ENCODE measurements at regions of chrX and their contacts with region 1.

Region 1: GRCh38 chrX:25144043-25144940 is 128.5 kb upstream of the ARX start:
- DNase-seq: peak; percentile 36
- H3K4me3 Mint-ChIP-seq: no peak overlapping the region
- H3K27ac Mint-ChIP-seq: no peak overlapping the region
- H3K4me1 Mint-ChIP-seq: no peaks in the 10 kb centered on the region
- H3K27me3 Mint-ChIP-seq: no peaks in the 10 kb centered on the region

Region 2: GRCh38 chrX:24838629-24839028 is 305.7 kb before region 1 on chrX:
- CTCF ChIA-PET with region 1: interaction called, 44 read pairs
- POLR2A ChIA-PET with region 1: no interaction called
- intact Hi-C with region 1: loop called (anchors 5 kb)
- DNase-seq: no peak
- H3K4me3 Mint-ChIP-seq: no peak overlapping the region
- H3K27ac Mint-ChIP-seq: no peak overlapping the region
- H3K4me1 Mint-ChIP-seq: no peaks in the 10 kb centered on the region
- H3K27me3 Mint-ChIP-seq: no peaks in the 10 kb centered on the region

Region 3: DNA sequence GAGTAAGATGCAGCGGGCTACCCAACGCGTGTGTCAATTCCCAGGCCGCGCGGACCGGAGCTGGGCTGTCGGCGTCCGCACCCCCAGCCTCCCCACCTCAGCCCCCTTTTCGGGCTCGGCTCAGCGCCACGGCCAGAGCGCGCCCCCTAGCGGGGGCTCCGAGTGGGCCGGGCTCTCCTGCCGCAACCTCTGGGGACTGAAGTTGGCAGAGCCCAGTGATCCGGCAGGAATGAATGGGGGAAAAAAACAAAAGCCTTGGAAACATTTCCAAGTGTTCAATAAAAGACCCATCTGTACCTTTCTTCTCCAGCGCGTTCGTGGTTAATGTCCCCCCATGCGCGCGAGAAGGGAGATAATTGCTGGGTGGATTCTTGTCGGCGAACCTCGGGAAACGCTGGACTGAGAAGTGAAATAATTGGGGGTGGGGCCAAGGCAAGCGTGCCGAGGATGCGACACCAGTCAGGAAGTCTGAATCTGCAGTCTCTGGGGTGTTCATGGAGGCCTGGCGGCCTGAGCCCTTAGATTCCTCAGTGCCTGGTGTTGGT is 123.3 kb before region 1 on chrX:
- CTCF ChIA-PET with region 1: interaction called, 8 read pairs
- POLR2A ChIA-PET with region 1: no interaction called
- intact Hi-C with region 1: loop called (anchors 2 kb)
- DNase-seq: peak; percentile 42
- H3K4me3 Mint-ChIP-seq: no peak overlapping the region
- H3K27ac Mint-ChIP-seq: no peak overlapping the region
- H3K4me1 Mint-ChIP-seq: peaks cover 27% of the 10 kb centered on the region
- H3K27me3 Mint-ChIP-seq: peaks cover 58% of the 10 kb centered on the region

Region 4: GRCh38 chrX:25131055-25131454 is 13.2 kb before region 1 on chrX:
- CTCF ChIA-PET with region 1: interaction called, 11 read pairs
- POLR2A ChIA-PET with region 1: no interaction called
- intact Hi-C with region 1: no loop called
- DNase-seq: no peak
- H3K4me3 Mint-ChIP-seq: no peak overlapping the region
- H3K27ac Mint-ChIP-seq: no peak overlapping the region
- H3K4me1 Mint-ChIP-seq: no peaks in the 10 kb centered on the region
- H3K27me3 Mint-ChIP-seq: peaks cover 14% of the 10 kb centered on the region

Region 5: GRCh38 chrX:25175743-25176142 is 31.5 kb after region 1 on chrX:
- CTCF ChIA-PET with region 1: no interaction called
- POLR2A ChIA-PET with region 1: no interaction called
- intact Hi-C with region 1: no loop called
- DNase-seq: no peak
- H3K4me3 Mint-ChIP-seq: no peak overlapping the region
- H3K27ac Mint-ChIP-seq: no peak overlapping the region
- H3K4me1 Mint-ChIP-seq: no peaks in the 10 kb centered on the region
- H3K27me3 Mint-ChIP-seq: no peaks in the 10 kb centered on the region

Measured in activated CD4-positive, alpha-beta memory T cell treated with anti-CD3 and anti-CD28 coated beads for 36 hours (primary cell).